Right ventricle myocardium inferior (tissue), 1 donor: ENCODE measurements at regions of chr10 and their contacts with region 1.

Region 1: GRCh38 chr10:32266979-32267378 is 80.0 kb downstream of the EPC1 start:
- DNase-seq: no peak
- ATAC-seq: no peak

Region 2: GRCh38 chr10:32298054-32298812 is 31.3 kb after region 1 on chr10:
- intact Hi-C with region 1: loop called (anchors 5 kb)
- DNase-seq: no peak
- ATAC-seq: no peak

Region 3: GRCh38 chr10:32340596-32341180 is 73.7 kb after region 1 on chr10:
- intact Hi-C with region 1: loop called (anchors 2 kb)
- DNase-seq: no peak
- ATAC-seq: no peak

Region 4: DNA sequence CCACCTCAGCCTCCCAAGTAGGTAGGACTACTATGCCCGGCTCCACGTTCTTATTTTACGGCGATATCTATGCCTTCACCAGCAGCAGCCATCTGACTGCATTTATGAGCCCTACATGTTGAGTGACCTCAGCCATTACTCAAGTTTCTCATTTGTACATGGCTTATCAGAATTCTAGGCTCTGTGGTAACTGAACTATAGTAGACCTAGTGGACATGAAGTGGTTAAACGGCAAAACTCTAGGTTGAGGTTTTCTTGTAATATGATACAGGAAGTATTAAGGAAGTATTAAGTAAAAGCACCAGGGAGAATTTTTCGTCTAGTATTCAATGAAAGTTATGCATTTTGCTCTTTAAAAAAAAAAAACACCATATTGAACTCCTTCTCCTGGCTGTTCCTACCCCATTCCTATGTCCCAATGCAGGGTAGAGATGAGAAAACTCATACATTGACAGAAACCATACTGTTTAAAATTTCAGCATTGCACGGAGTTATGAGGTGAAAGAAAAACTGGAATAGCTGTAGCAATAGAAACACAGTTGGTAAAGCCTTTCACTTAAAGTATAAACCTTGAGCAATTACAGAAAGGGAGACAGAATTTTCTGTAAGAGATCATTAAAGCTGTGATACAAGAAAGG is 119.8 kb after region 1 on chr10:
- intact Hi-C with region 1: no loop called
- DNase-seq: no peak
- ATAC-seq: no peak